Activated naive CD8-positive, alpha-beta T cell treated with anti-CD3 and anti-CD28 coated beads, Interleukin-2, amount 10 ng/mL, durations not matched to agents 7 days and 5 days (primary cell): ENCODE measurements at regions of chr6 and their contacts with region 1.

Region 1: GRCh38 chr6:42978839-42979522 is at the start of gene PEX6:
- DNase-seq: peak; percentile 93
- ATAC-seq: peak; percentile 94
- H3K4me3 Mint-ChIP-seq: peak within 1 kb of the TSS; percentile 89
- H3K27ac Mint-ChIP-seq: peak within 1 kb of the TSS; percentile 98
- H3K4me1 Mint-ChIP-seq: peaks cover 34% of the 10 kb centered on the region
- H3K27me3 Mint-ChIP-seq: no peaks in the 10 kb centered on the region
- total RNA-seq, gene PEX6: 27.1 to 27.6 TPM

Region 2: GRCh38 chr6:42963855-42964605 is 15.0 kb before region 1 on chr6:
- POLR2A ChIA-PET with region 1: interaction called, 23 read pairs
- DNase-seq: no peak
- ATAC-seq: peak; percentile 54
- H3K4me3 Mint-ChIP-seq: no peak overlapping the region
- H3K27ac Mint-ChIP-seq: no peak overlapping the region
- H3K4me1 Mint-ChIP-seq: peaks cover 11% of the 10 kb centered on the region
- H3K27me3 Mint-ChIP-seq: peaks cover 6% of the 10 kb centered on the region

Region 3: GRCh38 chr6:43021270-43022047 is 42.5 kb after region 1 on chr6 and contains the start of gene RRP36:
- POLR2A ChIA-PET with region 1: interaction called, 13 read pairs
- DNase-seq: peak; percentile 72
- ATAC-seq: peak; percentile 75
- H3K4me3 Mint-ChIP-seq: peak within 1 kb of the TSS; percentile 98
- H3K27ac Mint-ChIP-seq: peak within 1 kb of the TSS; percentile 93
- H3K4me1 Mint-ChIP-seq: peaks cover 19% of the 10 kb centered on the region
- H3K27me3 Mint-ChIP-seq: no peaks in the 10 kb centered on the region
- total RNA-seq, gene RRP36: 63.8 to 65.6 TPM